Transverse colon (tissue), 4 donors: ENCODE measurements at regions of chr6 and their contacts with region 1.

Region 1: GRCh38 chr6:92911301-92911700 is 508.1 kb downstream of the EPHA7 start:
- DNase-seq: no peak
- H3K4me3 ChIP-seq: no peak overlapping the region
- H3K27ac ChIP-seq: no peak overlapping the region
- H3K4me1 ChIP-seq: no peaks in the 10 kb centered on the region
- H3K27me3 ChIP-seq: no peaks in the 10 kb centered on the region
- CTCF ChIP-seq: no peak
- EP300 ChIP-seq: no peak
- POLR2A ChIP-seq: no peak

Region 2: DNA sequence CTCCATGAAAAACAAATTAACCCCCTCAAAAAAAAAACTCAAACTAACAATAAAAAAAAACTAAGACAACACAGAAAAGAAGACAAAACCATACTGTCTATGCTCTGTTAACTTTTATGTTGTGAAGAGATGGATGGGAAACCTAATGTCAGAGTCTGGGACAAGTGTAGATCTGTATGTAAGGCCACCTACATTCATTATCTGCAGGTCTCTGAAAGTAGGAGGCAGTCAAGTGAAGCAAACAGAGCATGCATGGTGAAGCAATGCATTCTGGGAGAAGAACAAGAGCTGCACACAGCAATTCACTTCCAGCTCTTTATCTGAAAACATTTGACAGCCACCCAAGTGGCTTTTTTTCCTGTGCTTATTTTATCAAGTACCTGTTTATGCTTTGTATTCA is 56.1 kb after region 1 on chr6:
- in situ Hi-C with region 1: no loop called
- intact Hi-C with region 1: loop called (anchors 2 kb)
- DNase-seq: no peak
- H3K4me3 ChIP-seq: no peak overlapping the region
- H3K27ac ChIP-seq: no peak overlapping the region
- H3K4me1 ChIP-seq: no peaks in the 10 kb centered on the region
- H3K27me3 ChIP-seq: no peaks in the 10 kb centered on the region
- CTCF ChIP-seq: no peak
- EP300 ChIP-seq: no peak
- POLR2A ChIP-seq: no peak